ENCODE measurements at regions of chr12 and their contacts with region 1.

Region 1: GRCh38 chr12:95532851-95533250 is 18.4 kb downstream of the USP44 start:
- DNase-seq: no peak
- H3K4me3 ChIP-seq: no peak overlapping the region
- H3K27ac ChIP-seq: no peak overlapping the region
- H3K27me3 ChIP-seq: no peaks in the 10 kb centered on the region
- CTCF ChIP-seq: no peak

Region 2: GRCh38 chr12:95117178-95117599 is 415.7 kb before region 1 on chr12:
- CTCF ChIA-PET with region 1: interaction called, 15 read pairs
- POLR2A ChIA-PET with region 1: no interaction called
- DNase-seq: peak; percentile 47
- H3K4me3 ChIP-seq: no peak overlapping the region
- H3K27ac ChIP-seq: no peak overlapping the region
- H3K27me3 ChIP-seq: no peaks in the 10 kb centered on the region
- CTCF ChIP-seq: peak; percentile 60

Region 3: DNA sequence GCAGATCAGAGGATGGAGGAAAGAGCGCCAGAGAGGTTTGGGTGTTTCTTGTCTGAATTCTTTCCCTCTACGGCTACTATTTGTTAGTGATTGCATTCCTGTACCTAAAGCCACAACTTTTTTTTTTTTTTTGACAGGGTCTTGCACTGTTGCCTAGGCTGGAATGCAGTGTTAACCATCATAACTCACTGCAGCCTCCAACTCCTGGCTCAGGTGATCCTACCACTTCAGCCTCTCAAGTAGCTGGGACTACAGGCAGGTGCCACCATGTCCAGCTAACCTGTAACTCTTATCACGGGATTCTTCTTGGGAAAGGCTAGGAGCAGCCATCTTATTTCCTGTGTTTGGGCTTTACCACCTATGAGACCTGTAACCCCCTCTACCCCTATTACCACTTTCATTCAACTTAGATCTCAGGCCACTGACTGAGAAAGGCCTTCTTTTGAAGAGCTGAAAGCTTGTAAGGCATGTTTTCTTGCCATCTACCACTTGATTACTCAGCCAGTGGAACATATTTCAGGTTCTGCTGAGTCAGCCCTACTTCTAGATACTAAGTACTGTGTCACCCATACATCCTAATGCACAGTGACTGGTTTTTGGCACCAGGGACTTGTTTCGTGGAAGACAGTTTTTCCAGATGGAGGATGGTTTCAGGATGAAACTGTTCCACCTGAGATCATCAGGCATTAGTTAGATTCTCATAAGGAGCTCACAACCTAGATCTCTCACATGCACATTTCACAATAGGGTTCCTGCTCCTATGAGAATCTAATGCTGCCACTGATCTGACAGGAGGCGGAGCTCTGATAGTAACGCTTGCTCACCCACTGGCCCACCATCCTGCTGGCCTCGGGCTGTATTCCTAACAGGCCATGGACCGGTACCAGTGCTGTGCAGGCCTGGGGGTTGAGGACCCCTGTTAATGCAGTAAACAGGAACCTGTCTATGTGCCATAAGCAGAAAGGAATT is 308.4 kb before region 1 on chr12:
- CTCF ChIA-PET with region 1: no interaction called
- POLR2A ChIA-PET with region 1: interaction called, 10 read pairs
- DNase-seq: no peak
- H3K4me3 ChIP-seq: no peak overlapping the region
- H3K27ac ChIP-seq: peak overlapping the region; percentile 25
- H3K27me3 ChIP-seq: no peaks in the 10 kb centered on the region
- CTCF ChIP-seq: no peak

Region 4: DNA sequence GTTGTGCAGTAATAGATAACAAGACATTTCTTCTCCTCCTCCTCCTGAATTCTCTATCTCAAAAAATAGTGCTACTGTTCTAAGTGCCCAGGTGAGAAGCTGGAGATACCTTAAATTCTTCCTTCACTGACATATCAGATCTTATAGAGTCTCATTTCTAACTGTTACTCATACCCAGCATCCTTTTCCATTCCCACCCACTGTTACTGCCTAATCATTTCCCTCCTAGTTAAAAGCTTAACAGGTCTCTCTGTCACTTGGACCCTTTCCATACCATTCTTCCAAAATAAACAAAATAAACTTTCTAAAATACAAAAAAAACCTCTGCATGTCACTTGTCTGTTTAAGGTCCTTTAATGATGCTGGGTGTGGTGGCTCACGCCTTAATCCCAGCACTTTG is 190.8 kb before region 1 on chr12:
- CTCF ChIA-PET with region 1: interaction called, 11 read pairs
- POLR2A ChIA-PET with region 1: no interaction called
- DNase-seq: no peak
- H3K4me3 ChIP-seq: no peak overlapping the region
- H3K27ac ChIP-seq: no peak overlapping the region
- H3K27me3 ChIP-seq: no peaks in the 10 kb centered on the region
- CTCF ChIP-seq: no peak

Region 5: GRCh38 chr12:95516757-95517156 is 16.1 kb before region 1 on chr12:
- CTCF ChIA-PET with region 1: interaction called, 20 read pairs
- POLR2A ChIA-PET with region 1: interaction called, 6 read pairs
- DNase-seq: no peak
- H3K4me3 ChIP-seq: no peak overlapping the region
- H3K27ac ChIP-seq: no peak overlapping the region
- H3K27me3 ChIP-seq: no peaks in the 10 kb centered on the region
- CTCF ChIP-seq: no peak

Region 6: DNA sequence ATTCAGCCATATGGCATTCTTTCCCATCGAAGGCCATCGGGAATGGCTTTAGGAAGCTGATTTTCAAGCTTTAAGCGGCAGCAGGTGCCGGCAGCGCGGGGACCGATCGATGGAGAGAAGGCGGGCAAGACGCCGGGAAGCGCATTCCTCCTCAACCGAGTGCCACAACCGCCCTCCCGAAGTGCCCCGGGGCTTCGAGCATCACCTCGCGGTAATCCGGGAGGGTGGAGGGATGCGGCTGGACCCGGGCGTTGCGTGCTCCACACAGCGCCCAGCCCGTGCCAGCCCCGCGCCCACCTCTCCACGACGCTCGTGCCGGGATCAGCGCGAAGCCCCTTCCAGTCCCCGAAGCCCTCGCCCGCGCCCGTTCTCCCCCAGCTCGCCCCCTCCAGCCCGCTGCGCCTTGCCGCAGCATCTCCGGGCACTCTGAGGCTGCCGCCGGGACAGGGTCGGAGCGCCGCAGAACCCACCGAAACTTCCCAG is 15.2 kb after region 1 on chr12:
- CTCF ChIA-PET with region 1: interaction called, 14 read pairs
- POLR2A ChIA-PET with region 1: interaction called, 6 read pairs
- DNase-seq: no peak
- H3K4me3 ChIP-seq: peak overlapping the region; percentile 84
- H3K27ac ChIP-seq: peak overlapping the region; percentile 99
- H3K27me3 ChIP-seq: no peaks in the 10 kb centered on the region
- CTCF ChIP-seq: no peak